ENCODE measurements at regions of chr20 and their contacts with region 1.

Region 1: DNA sequence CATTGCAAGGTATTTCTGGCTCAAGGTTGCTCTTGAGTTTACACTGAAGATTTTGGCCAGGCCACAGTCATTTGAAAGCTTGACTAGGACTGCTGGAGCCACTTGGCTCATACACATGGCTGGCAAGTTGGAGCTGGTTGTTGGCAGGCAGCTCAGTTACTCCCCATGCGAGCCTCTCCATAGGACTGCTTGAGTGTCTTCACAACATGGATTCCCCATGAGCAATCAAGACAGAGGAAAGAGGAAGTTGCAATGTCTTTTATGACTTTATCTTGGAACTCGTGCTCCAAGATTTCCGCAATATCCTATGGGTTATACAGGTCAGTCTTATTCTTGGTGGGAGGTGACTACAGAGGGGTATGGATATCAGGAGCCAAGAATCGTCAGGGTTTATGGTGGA is 1.4 kb upstream of the MANBAL start:
- DNase-seq: peak in 1 of 4 experiments; percentile 36
- ATAC-seq: no peak
- H3K4me3 ChIP-seq: no peak overlapping the region
- H3K27ac ChIP-seq: no peak overlapping the region; the same call in 2 of the 3 replicates
- H3K4me1 ChIP-seq: peaks cover 5 to 17% of the 10 kb centered on the region in 2 experiments
- H3K27me3 ChIP-seq: no peaks in the 10 kb centered on the region
- CTCF ChIP-seq: no peak
- EP300 ChIP-seq: no peak
- POLR2A ChIP-seq: no peak
- RAD21 ChIP-seq: no peak

Region 2: DNA sequence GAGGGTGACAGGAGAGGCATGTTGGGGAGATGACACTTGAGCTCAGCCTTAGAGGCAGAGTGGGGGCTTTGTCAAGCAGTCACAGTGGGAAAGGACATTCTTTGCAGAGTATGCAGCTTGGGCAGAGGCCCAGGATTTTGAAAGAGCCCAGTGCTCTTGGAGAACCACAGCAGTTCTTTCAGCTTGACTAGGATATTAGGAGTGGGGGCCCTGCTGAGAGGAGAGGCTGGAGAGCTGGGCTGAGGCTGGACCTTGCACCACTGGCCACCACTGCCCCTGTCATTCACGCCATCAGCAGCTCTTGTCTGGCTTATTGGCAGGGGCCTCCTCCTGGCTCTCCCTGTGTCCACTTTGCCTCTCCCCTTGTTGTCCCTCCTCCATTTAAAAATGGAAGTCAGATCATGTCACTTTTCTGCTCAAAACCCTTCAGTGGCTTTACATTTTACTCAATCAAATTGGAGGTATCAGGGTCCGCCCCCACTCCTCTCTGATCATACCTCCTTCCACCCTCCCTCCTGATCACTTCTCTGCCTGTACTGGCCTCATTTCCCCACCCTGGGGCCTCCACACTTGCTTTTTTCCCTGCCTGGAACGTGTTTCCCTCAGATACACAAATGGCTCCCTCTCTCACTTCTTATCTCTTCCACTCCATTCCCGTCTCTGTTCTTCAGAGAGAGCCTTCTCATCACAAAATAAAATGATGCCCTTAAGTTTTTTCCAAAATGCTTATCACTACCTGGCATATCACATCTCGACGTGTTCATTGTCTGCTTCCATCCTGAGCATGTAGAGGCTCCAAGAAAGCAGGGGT is 11.8 kb after region 1 on chr20:
- CTCF ChIA-PET with region 1: no interaction called
- POLR2A ChIA-PET with region 1: interaction called, 16 read pairs
- in situ Hi-C with region 1: no loop called
- intact Hi-C with region 1: no loop called
- DNase-seq: peak; percentile 46 to 69 (median 50)
- ATAC-seq: peak; percentile 76
- H3K4me3 ChIP-seq: no peak overlapping the region
- H3K27ac ChIP-seq: peak overlapping the region; percentile 55
- H3K4me1 ChIP-seq: peaks cover 8 to 22% of the 10 kb centered on the region in 2 experiments; a peak in 3 of 5 replicates
- H3K27me3 ChIP-seq: no peaks in the 10 kb centered on the region
- CTCF ChIP-seq: no peak
- EP300 ChIP-seq: no peak
- POLR2A ChIP-seq: no peak
- RAD21 ChIP-seq: no peak

Region 3: DNA sequence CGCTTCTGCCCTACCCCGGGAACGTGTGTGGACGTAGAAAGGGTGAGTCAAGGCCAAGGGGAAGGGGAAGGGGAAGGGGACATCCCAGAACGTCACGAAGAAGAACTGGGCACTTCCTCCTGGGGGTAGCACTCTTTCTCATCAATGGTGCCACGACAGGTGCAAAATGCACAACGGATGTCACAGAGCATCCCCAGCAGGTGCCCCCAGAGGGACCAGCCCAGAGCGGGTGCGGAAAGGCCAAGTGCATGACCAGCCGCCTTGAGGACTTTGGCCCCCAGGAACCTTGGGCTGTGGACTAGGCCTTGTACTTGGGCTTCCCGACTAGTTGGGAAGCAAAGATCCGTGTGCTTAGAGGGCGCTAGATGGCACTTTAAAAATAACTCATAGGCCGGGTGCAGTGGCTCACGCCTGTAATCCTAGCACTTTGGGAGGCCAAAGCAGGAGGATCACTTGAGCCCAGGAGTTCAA is 45.8 kb after region 1 on chr20:
- CTCF ChIA-PET with region 1: no interaction called
- POLR2A ChIA-PET with region 1: no interaction called
- in situ Hi-C with region 1: no loop called
- intact Hi-C with region 1: loop called (anchors 5 kb)
- DNase-seq: no peak
- ATAC-seq: no peak
- H3K4me3 ChIP-seq: no peak overlapping the region
- H3K27ac ChIP-seq: no peak overlapping the region
- H3K4me1 ChIP-seq: peaks cover 22 to 24% of the 10 kb centered on the region in 2 experiments
- H3K27me3 ChIP-seq: no peaks in the 10 kb centered on the region
- CTCF ChIP-seq: no peak
- EP300 ChIP-seq: no peak
- POLR2A ChIP-seq: no peak
- RAD21 ChIP-seq: no peak

Measured in K562 (cell line).